WTC11 (cell line): ENCODE measurements at regions of chr12 and their contacts with region 1.

Region 1: GRCh38 chr12:2624543-2625288 is 170.1 kb upstream of the FKBP4 start:
- DNase-seq: peak; percentile 87
- ATAC-seq: peak; percentile 91
- H3K4me3 Mint-ChIP-seq: no peak overlapping the region
- H3K27ac Mint-ChIP-seq: peak overlapping the region; percentile 85
- H3K4me1 Mint-ChIP-seq: peaks cover 29% of the 10 kb centered on the region
- H3K27me3 Mint-ChIP-seq: no peaks in the 10 kb centered on the region; the same call in 1 of the 2 replicates
- CTCF ChIP-seq: peak; percentile 66

Region 2: DNA sequence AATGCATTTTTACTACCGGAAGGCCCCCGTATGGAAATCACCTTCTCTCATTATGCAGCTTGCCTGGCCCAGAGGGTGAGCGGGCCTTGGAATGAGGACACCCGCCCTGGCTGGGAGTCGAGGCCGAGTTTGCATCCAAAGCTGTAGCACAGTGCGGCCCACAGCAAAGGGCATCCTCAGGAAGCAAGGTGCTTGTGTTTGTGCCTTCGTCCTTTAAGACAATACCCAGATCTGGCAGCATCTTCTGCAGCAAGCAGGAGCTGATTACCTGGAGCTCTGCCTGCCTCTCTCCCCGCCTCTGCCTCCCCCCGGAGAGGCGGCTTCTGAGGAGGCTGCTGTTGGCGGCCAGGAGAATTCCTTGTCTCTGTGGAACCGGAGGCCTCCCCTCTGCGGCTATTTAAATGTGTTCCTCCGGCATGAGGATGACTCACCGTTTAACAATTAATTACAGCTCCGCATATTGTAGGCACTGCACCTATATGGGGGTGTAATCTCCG is 426.7 kb before region 1 on chr12:
- CTCF ChIA-PET with region 1: no interaction called
- POLR2A ChIA-PET with region 1: no interaction called
- DNase-seq: peak; percentile 69
- ATAC-seq: peak; percentile 88
- H3K4me3 Mint-ChIP-seq: peak overlapping the region; percentile 61
- H3K27ac Mint-ChIP-seq: peak overlapping the region; percentile 96
- H3K4me1 Mint-ChIP-seq: peaks cover 67% of the 10 kb centered on the region
- H3K27me3 Mint-ChIP-seq: no peaks in the 10 kb centered on the region
- CTCF ChIP-seq: no peak

Region 3: GRCh38 chr12:2583091-2583497 is 41.6 kb before region 1 on chr12:
- CTCF ChIA-PET with region 1: interaction called, 17 read pairs
- POLR2A ChIA-PET with region 1: no interaction called
- DNase-seq: peak; percentile 79
- ATAC-seq: peak; percentile 89
- H3K4me3 Mint-ChIP-seq: no peak overlapping the region
- H3K27ac Mint-ChIP-seq: no peak overlapping the region
- H3K4me1 Mint-ChIP-seq: peaks cover 20% of the 10 kb centered on the region
- H3K27me3 Mint-ChIP-seq: peaks cover 33% of the 10 kb centered on the region
- CTCF ChIP-seq: peak; percentile 91

Region 4: GRCh38 chr12:2613326-2614073 is 11.2 kb before region 1 on chr12:
- CTCF ChIA-PET with region 1: interaction called, 30 read pairs
- POLR2A ChIA-PET with region 1: interaction called, 3 read pairs
- DNase-seq: no peak
- ATAC-seq: no peak
- H3K4me3 Mint-ChIP-seq: no peak overlapping the region
- H3K27ac Mint-ChIP-seq: no peak overlapping the region
- H3K4me1 Mint-ChIP-seq: peaks cover 12% of the 10 kb centered on the region
- H3K27me3 Mint-ChIP-seq: no peaks in the 10 kb centered on the region
- CTCF ChIP-seq: no peak

Region 5: DNA sequence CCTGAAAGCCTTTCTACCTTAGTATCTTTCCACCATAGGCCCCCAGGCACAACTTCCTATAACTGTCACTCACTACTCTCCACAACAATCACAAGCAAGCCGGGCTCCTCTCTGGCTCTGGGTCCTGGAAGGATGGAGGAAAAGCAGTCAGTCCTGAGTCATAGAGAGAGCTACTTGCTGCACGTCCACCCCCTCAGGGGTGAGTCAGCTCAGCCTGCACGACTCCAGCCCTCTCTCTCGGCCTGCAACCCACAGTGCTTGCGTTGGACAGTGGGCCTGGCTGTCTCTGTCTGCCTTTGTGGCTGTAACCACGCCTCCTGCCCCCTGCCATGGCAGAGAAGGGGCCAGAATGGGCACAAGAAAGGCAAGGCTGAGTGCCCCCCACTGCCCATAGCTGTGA is 16.0 kb after region 1 on chr12:
- CTCF ChIA-PET with region 1: interaction called, 27 read pairs
- POLR2A ChIA-PET with region 1: no interaction called
- DNase-seq: peak; percentile 11
- ATAC-seq: peak; percentile 43
- H3K4me3 Mint-ChIP-seq: no peak overlapping the region
- H3K27ac Mint-ChIP-seq: peak overlapping the region; percentile 40; the same call in 1 of the 2 replicates
- H3K4me1 Mint-ChIP-seq: peaks cover 36% of the 10 kb centered on the region
- H3K27me3 Mint-ChIP-seq: no peaks in the 10 kb centered on the region
- CTCF ChIP-seq: no peak

Region 6: GRCh38 chr12:2652401-2653081 is 27.8 kb after region 1 on chr12:
- CTCF ChIA-PET with region 1: interaction called, 10 read pairs
- POLR2A ChIA-PET with region 1: no interaction called
- DNase-seq: peak; percentile 70
- ATAC-seq: peak; percentile 88
- H3K4me3 Mint-ChIP-seq: no peak overlapping the region
- H3K27ac Mint-ChIP-seq: no peak overlapping the region
- H3K4me1 Mint-ChIP-seq: no peaks in the 10 kb centered on the region
- H3K27me3 Mint-ChIP-seq: no peaks in the 10 kb centered on the region
- CTCF ChIP-seq: no peak

Region 7: GRCh38 chr12:2682296-2683251 is 57.9 kb after region 1 on chr12:
- CTCF ChIA-PET with region 1: interaction called, 11 read pairs
- POLR2A ChIA-PET with region 1: no interaction called
- DNase-seq: peak; percentile 64
- ATAC-seq: peak; percentile 72
- H3K4me3 Mint-ChIP-seq: no peak overlapping the region
- H3K27ac Mint-ChIP-seq: no peak overlapping the region
- H3K4me1 Mint-ChIP-seq: peaks cover 20% of the 10 kb centered on the region
- H3K27me3 Mint-ChIP-seq: no peaks in the 10 kb centered on the region
- CTCF ChIP-seq: no peak

Region 8: GRCh38 chr12:2733477-2734355 is 109.0 kb after region 1 on chr12:
- CTCF ChIA-PET with region 1: no interaction called
- POLR2A ChIA-PET with region 1: no interaction called
- DNase-seq: no peak
- ATAC-seq: peak; percentile 70; the same call in 1 of the 2 replicates
- H3K4me3 Mint-ChIP-seq: no peak overlapping the region
- H3K27ac Mint-ChIP-seq: no peak overlapping the region
- H3K4me1 Mint-ChIP-seq: no peaks in the 10 kb centered on the region
- H3K27me3 Mint-ChIP-seq: peaks cover 14% of the 10 kb centered on the region
- CTCF ChIP-seq: no peak